Right cardiac atrium (tissue), 5 donors: ENCODE measurements at regions of chr17 and their contacts with region 1.

Region 1: DNA sequence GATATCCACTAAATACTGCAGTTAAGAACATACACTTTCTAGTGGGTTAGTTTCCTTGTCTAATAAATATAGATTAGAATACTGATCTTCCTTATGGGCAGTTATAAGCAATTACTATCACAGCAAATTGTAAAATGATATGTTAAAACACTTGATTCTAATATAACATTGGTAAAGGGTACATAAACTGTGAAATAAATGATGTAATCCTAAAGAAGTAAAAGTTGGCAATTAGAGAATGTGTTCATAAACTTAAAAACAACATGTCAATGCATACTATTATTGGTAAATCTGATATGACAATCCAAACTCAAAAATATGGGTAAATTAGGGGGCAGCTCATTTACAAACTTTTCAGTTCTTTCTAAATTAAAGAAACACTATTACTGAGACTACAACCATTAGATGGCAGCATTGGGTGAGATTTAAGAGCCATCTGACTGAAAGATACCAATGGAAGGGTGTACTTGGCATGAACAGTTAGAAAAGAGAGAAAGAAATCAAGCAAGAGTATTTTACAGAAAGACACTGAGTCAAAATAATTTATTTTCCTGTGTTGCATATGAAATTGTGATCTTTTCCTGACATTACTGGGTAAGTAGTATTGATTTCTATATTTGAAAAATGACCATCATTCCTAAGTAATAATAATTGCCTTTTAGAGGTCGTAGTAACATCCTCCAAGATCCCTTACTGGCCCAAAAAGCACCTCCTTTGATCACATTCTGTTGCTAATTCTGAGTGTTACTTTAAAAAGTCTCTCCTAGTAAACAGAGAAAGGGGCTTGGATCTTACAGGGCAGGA is 119.6 kb downstream of the SPAG9 start:
- DNase-seq: no peak
- ATAC-seq: peak; percentile 68 to 70
- H3K4me3 ChIP-seq: no peak overlapping the region
- H3K27ac ChIP-seq: no peak overlapping the region
- H3K4me1 ChIP-seq: no peaks in the 10 kb centered on the region
- H3K27me3 ChIP-seq: no peaks in the 10 kb centered on the region

Region 2: DNA sequence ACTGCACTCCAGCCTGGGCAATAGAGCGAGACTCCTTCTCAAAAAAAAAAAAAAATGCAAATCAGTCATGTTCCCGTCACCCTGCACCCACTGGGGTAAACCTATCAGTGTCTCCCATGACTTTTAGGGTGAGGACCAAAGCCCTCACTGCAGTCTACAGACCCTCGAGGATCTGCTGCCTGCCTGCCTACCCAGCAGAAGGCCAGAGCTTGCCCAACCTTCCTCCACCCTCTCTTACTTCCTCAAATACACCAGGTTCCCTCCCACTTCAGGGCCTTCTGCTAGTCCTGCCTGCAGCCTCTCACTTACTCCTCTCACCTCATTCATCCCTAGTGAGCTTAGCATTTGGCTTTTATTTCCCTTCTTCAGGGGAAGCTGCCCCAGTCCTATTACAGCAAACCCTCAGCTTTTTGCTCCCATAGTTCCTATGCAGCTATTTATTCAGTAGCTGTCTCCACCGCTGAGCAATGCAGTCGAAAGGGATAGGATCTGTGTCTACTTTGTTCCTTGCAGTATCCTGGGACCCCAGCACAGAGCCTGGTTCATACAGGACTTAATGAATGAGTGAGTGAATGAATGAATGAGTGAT is 117.1 kb before region 1 on chr17:
- intact Hi-C with region 1: no loop called
- DNase-seq: peak in 1 of 3 donors; percentile 53
- ATAC-seq: peak; percentile 56 to 59
- H3K4me3 ChIP-seq: no peak overlapping the region
- H3K27ac ChIP-seq: no peak overlapping the region
- H3K4me1 ChIP-seq: peaks cover 5% of the 10 kb centered on the region
- H3K27me3 ChIP-seq: no peaks in the 10 kb centered on the region

Region 3: DNA sequence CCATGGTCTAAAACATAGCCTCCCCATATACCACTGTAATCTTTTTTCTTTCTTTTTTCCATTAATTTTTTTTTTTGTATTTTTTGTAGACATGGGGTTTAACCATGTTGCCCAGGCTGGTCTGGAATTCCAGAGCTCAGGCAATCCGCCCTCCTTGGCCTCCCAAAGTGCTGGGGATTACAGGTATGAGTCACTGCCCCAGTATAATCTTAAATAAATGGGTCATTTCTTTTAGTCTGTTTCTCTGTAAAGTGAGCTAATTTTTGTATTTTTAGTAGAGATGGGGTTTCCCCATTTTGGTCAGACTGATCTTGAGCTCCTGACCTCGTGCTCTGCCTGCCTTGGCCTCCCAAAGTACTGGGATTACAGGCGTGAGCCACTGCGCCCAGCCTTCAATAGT is 146.6 kb after region 1 on chr17:
- intact Hi-C with region 1: loop called (anchors 2 to 10 kb)
- DNase-seq: no peak
- ATAC-seq: no peak
- H3K4me3 ChIP-seq: no peak overlapping the region
- H3K27ac ChIP-seq: no peak overlapping the region
- H3K4me1 ChIP-seq: no peaks in the 10 kb centered on the region
- H3K27me3 ChIP-seq: no peaks in the 10 kb centered on the region

Region 4: DNA sequence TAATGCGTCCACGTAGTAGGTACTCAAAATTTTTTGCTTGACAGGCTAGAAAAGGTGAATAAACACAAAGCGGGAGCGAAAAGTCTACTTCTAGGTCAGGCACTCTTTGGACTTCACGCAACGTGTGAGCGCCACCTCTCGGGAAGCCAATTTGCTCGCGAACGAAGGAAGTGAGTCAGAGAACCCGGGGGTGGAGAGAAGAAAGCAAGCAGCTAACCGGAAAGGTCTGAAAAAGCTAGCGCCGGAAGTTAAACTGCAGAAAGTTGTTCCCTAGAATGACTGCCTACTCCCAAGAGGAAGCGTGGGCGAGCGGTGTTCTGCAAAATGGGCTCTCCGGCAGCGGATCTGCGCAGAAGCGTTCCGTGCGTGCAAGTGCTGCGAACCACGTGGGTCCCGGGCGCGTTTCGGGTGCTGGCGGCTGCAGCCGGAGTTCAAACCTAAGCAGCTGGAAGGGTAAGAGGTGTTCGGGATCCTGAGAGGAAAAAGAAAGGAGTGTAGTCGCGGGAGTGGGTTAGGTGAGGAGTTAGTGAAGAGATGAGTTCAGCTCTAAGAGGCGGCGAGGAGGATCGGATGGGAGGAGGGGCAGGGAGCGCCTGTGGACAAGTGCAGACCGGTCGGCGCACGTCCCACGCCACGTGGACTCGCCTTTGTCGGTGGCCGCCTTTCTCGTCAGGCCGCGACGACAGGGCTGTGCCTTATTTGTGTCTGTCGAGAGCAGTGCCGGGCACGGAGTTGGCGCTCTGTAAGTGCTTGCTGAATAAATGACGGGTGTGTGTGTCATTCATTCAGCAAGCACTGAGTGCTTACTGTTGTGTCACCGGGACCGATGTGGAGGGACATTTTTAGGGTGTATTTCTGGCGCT is 152.4 kb after region 1 on chr17 and contains the start of gene NME1:
- intact Hi-C with region 1: loop called (anchors 2 to 10 kb)
- DNase-seq: peak; percentile 94 to 97 (median 97)
- ATAC-seq: peak; percentile 97
- H3K4me3 ChIP-seq: peak within 1 kb of the TSS; percentile 51
- H3K27ac ChIP-seq: peak within 1 kb of the TSS; percentile 86
- H3K4me1 ChIP-seq: peaks cover 2% of the 10 kb centered on the region
- H3K27me3 ChIP-seq: no peaks in the 10 kb centered on the region
- total RNA-seq, gene NME1: 18.7 to 43.8 (median 25.0) TPM